BJ (cell line): ENCODE measurements at regions of chr16 and their contacts with region 1.

Region 1: GRCh38 chr16:2926650-2927646 is 15.2 kb downstream of the FLYWCH1 start:
- DNase-seq: no peak
- H3K4me3 ChIP-seq: no peak overlapping the region
- H3K27me3 ChIP-seq: no peaks in the 10 kb centered on the region
- CTCF ChIP-seq: peak; percentile 93

Region 2: DNA sequence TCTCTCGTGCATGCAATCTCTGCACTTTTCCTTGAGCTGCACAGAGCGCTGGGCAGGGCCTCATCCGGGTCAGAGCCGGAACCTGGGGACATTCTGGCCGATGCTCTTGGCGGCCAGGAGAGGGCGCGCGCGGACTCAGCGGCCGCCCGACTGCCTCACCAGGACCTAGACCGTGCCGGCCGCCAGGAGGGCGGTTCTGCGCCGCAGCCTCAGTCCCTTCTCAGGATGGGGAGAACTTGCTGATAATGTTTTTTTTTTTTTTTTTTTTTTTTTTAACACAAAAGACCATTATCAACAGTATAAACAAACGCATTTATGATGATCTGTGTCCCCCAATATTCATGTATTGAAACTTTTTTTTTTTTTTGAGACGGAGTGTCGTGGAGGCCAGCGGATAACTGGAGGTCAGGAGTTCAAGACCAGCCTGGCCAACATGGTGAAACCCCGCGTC is 52.0 kb before region 1 on chr16:
- CTCF ChIA-PET with region 1: interaction called, 24 read pairs
- POLR2A ChIA-PET with region 1: no interaction called
- DNase-seq: no peak
- H3K4me3 ChIP-seq: no peak overlapping the region
- H3K27me3 ChIP-seq: no peaks in the 10 kb centered on the region
- CTCF ChIP-seq: peak; percentile 97

Region 3: GRCh38 chr16:2905431-2906387 is 21.2 kb before region 1 on chr16:
- CTCF ChIA-PET with region 1: interaction called, 16 read pairs
- POLR2A ChIA-PET with region 1: interaction called, 5 read pairs
- DNase-seq: peak; percentile 92
- H3K4me3 ChIP-seq: peak overlapping the region; percentile 73
- H3K27me3 ChIP-seq: no peaks in the 10 kb centered on the region
- CTCF ChIP-seq: no peak

Region 4: GRCh38 chr16:2939968-2940367 is 13.0 kb after region 1 on chr16:
- CTCF ChIA-PET with region 1: interaction called, 20 read pairs
- POLR2A ChIA-PET with region 1: no interaction called
- DNase-seq: no peak
- H3K4me3 ChIP-seq: no peak overlapping the region
- H3K27me3 ChIP-seq: no peaks in the 10 kb centered on the region
- CTCF ChIP-seq: no peak